ENCODE measurements at regions of chr5 and their contacts with region 1.

Region 1: DNA sequence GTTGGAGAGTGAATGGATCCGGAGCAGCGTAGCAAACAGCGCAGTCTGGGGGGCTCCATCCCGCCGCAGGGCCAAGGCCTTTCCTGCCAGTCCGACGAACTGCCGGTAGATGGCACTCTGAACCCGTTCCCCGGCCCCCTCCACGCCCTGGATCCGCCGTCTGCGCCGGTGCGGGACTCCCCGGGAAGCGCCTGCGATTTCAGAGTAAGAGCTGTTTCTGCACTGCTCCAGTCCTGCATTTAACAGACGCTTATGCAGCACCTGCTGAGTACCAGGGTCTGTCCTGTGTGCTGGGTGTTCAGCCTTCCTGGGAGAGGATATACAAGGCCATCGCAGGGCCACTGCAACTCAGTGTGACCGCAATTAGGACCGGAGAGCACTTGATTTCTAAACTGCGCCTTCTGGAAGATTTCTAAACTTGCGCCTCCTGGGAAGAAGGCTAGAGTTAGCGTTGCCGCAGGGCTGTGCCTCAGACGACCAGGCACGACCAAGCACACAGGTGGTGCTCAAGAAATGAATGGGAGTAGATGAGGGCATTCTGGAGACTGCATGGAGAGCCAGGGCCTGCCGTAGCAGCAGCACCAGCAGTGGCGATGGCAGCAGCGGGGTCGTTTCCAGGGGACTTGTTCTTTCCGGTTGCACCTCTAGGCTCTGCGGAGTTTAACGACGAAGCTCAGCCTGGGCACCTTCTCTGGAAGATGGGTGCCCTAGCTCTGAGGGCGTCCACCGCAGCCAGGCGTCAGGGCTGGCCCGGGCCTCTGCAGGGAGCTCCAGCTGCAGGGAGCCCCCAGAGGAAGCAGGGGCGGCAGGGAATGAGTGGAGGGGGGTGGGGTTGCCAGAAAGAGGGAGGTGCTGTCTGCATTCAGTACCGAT is 14.3 kb upstream of the TIFAB start:
- DNase-seq: peak; percentile 74 to 93 (median 80)
- ATAC-seq: peak; percentile 98
- H3K4me3 ChIP-seq: no peak overlapping the region
- H3K27ac ChIP-seq: no peak overlapping the region
- H3K4me1 ChIP-seq: peaks cover 0 to 10% of the 10 kb centered on the region in 2 donors
- H3K27me3 ChIP-seq: peaks cover 7 to 74% of the 10 kb centered on the region in 2 donors
- CTCF ChIP-seq: peak; percentile 80 to 82

Region 2: GRCh38 chr5:135356522-135357318 is 109.7 kb before region 1 on chr5:
- intact Hi-C with region 1: no loop called
- DNase-seq: peak in 2 of 4 donors; percentile 48 to 84
- ATAC-seq: peak; percentile 60
- H3K4me3 ChIP-seq: no peak overlapping the region
- H3K27ac ChIP-seq: peak overlapping the region; percentile 9 to 42
- H3K4me1 ChIP-seq: peaks cover 10 to 25% of the 10 kb centered on the region in 2 donors
- H3K27me3 ChIP-seq: no peaks in the 10 kb centered on the region
- CTCF ChIP-seq: no peak

Region 3: DNA sequence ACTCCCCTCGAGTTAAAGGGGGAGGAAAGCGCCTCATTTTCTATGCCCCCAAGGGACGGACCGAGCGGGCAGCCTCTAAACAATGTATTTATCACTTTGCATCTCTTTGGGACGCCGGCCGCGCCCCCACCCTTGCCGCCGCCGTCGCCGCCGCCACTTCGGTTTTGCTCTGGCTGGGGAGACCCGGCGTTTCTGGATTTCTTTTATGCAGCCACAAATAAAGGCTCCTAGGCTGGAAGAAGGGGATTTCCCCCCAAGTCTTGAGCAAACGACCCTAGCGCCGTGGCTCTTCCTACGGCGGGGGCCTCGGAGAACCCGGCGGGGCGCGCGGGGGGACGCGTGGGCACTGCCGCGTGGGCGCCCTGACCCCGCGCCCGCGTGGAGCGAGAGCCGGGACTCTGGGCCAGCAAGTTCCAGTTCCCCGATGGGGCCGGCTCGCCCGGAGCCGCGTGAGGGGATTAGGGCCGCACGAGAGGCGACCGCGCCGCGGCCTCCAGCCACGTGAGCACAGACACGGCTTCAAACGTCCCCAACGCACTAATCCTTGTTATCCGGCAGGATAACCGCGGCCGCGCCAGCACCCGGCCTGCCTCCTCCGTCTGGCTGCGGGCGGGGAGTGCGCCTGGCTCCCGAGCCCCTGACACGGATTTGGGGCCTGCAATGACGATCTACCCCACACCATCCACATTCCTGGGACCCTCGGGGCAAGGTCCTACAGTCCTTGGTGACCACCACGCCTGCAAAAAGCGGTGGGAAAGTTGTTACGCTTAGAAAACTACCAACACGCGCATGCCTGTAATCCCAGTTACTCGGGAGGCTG is 77.3 kb after region 1 on chr5:
- intact Hi-C with region 1: loop called in 1 of 2 experiments (anchors 10 kb)
- DNase-seq: peak in 3 of 4 donors; percentile 18 to 74 (median 37)
- ATAC-seq: peak; percentile 65
- H3K4me3 ChIP-seq: peak overlapping the region; percentile 30 to 44
- H3K27ac ChIP-seq: no peak overlapping the region
- H3K4me1 ChIP-seq: peaks cover 13 to 19% of the 10 kb centered on the region in 2 donors
- H3K27me3 ChIP-seq: peaks cover 57 to 99% of the 10 kb centered on the region in 2 donors
- CTCF ChIP-seq: no peak

Region 4: GRCh38 chr5:135551593-135552447 is 85.4 kb after region 1 on chr5:
- intact Hi-C with region 1: loop called (anchors 5 to 10 kb)
- DNase-seq: peak in 3 of 4 donors; percentile 55 to 81 (median 65)
- ATAC-seq: peak; percentile 92
- H3K4me3 ChIP-seq: no peak overlapping the region
- H3K27ac ChIP-seq: no peak overlapping the region
- H3K4me1 ChIP-seq: no peaks in the 10 kb centered on the region
- H3K27me3 ChIP-seq: peaks cover 3 to 99% of the 10 kb centered on the region in 2 donors
- CTCF ChIP-seq: peak; percentile 80 to 82